Activated CD4-positive, alpha-beta memory T cell treated with anti-CD3 and anti-CD28 coated beads, Interleukin-2, amount 10 ng/mL, durations not matched to agents 7 days and 5 days (primary cell): ENCODE measurements at regions of chr19 and their contacts with region 1.

Region 1: GRCh38 chr19:21328885-21329605 is at the start of gene ZNF708:
- DNase-seq: peak; percentile 84
- H3K4me3 Mint-ChIP-seq: peak within 1 kb of the TSS; percentile 97
- H3K27ac Mint-ChIP-seq: peak within 1 kb of the TSS; percentile 99
- H3K4me1 Mint-ChIP-seq: peaks cover 34% of the 10 kb centered on the region
- H3K27me3 Mint-ChIP-seq: no peaks in the 10 kb centered on the region
- total RNA-seq, gene ZNF708: 14.8 to 16.7 TPM

Region 2: DNA sequence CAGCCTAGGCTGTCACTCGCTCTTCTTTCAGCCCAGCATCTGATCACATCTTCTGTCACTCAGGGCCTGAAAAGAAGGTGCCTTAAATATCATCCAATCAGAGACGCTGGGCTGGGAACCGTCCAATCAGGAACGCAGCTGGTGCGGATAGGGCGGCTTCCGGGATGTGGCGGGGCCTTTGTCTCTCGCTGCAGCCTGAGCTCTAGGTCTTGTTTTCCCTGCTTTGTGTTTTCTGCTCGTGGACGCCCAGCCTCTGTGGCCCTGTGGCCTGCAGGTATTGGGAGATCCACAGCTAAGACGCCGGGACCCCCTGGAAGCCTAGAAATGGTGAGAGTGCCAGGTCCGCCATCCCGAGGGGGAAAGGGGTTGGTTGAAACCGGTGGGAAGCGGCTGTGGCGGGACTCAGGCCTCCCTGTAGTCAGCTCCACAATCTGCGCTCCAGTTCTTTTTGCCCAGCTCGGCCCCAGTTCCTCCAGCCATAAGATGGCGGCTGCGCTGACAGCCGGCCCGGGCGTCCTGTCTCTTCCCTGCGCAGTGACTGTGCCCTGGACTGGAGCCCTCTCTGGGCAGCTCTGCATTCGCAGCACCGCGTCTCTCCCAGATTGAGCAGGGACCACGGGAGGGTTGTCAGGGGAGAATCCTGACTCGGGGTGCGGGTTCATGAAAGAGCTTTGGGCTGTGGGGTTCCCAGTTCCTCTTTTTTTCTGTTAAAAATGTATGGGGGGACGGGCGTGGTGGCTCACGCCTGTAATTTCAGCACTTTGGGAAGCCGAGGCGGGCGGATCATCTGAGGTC is 405.8 kb before region 1 on chr19 and contains the start of gene ZNF85:
- CTCF ChIA-PET with region 1: no interaction called
- POLR2A ChIA-PET with region 1: interaction called, 12 read pairs
- DNase-seq: peak; percentile 94
- H3K4me3 Mint-ChIP-seq: peak within 1 kb of the TSS; percentile 94
- H3K27ac Mint-ChIP-seq: peak within 1 kb of the TSS; percentile 94
- H3K4me1 Mint-ChIP-seq: peaks cover 19% of the 10 kb centered on the region
- H3K27me3 Mint-ChIP-seq: no peaks in the 10 kb centered on the region
- total RNA-seq, gene ZNF85: 16.4 to 17.2 TPM

Region 3: GRCh38 chr19:21020298-21021227 is 308.5 kb before region 1 on chr19 and contains the start of gene ZNF430:
- CTCF ChIA-PET with region 1: no interaction called
- POLR2A ChIA-PET with region 1: interaction called, 19 read pairs
- DNase-seq: peak; percentile 96
- H3K4me3 Mint-ChIP-seq: peak within 1 kb of the TSS; percentile 99
- H3K27ac Mint-ChIP-seq: peak within 1 kb of the TSS; percentile 99
- H3K4me1 Mint-ChIP-seq: peaks cover 39% of the 10 kb centered on the region
- H3K27me3 Mint-ChIP-seq: no peaks in the 10 kb centered on the region
- total RNA-seq, gene ZNF430: 24.0 to 27.0 TPM

Region 4: DNA sequence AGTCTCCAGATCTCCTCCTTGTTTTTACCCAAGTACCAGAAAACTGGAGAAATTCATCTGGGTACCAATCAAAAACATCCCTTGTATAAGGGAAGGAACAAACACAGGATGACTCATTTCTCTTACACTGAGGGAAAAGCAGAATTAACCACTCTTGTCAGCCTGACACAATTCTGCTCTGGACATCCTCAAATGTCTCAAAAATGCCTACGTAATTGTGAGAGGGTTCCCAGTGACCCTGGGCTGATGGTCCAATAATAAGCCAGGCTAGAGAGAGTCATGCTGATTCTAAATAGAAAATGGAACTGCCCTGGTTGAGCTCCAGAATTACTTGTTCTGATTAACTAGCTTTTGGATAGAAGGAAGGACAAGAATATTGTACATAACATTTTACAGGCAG is 14.4 kb before region 1 on chr19:
- CTCF ChIA-PET with region 1: interaction called, 4 read pairs
- POLR2A ChIA-PET with region 1: interaction called, 24 read pairs
- DNase-seq: no peak
- H3K4me3 Mint-ChIP-seq: no peak overlapping the region
- H3K27ac Mint-ChIP-seq: no peak overlapping the region
- H3K4me1 Mint-ChIP-seq: no peaks in the 10 kb centered on the region
- H3K27me3 Mint-ChIP-seq: no peaks in the 10 kb centered on the region

Region 5: GRCh38 chr19:21396893-21397572 is 68.0 kb after region 1 on chr19 and contains the start of gene ZNF493:
- CTCF ChIA-PET with region 1: interaction called, 3 read pairs
- POLR2A ChIA-PET with region 1: interaction called, 28 read pairs
- DNase-seq: peak; percentile 93
- H3K4me3 Mint-ChIP-seq: peak within 1 kb of the TSS; percentile 93
- H3K27ac Mint-ChIP-seq: peak within 1 kb of the TSS; percentile 81
- H3K4me1 Mint-ChIP-seq: peaks cover 22% of the 10 kb centered on the region
- H3K27me3 Mint-ChIP-seq: no peaks in the 10 kb centered on the region
- total RNA-seq, gene ZNF493: 15.7 to 17.5 TPM

Region 6: GRCh38 chr19:21586311-21587116 is 257.5 kb after region 1 on chr19:
- CTCF ChIA-PET with region 1: no interaction called
- POLR2A ChIA-PET with region 1: no interaction called
- DNase-seq: no peak
- H3K4me3 Mint-ChIP-seq: peak overlapping the region; percentile 24
- H3K27ac Mint-ChIP-seq: no peak overlapping the region
- H3K4me1 Mint-ChIP-seq: peaks cover 2% of the 10 kb centered on the region
- H3K27me3 Mint-ChIP-seq: no peaks in the 10 kb centered on the region

Region 7: GRCh38 chr19:21835810-21836444 is 506.9 kb after region 1 on chr19 and contains the start of gene ZNF43:
- CTCF ChIA-PET with region 1: interaction called, 3 read pairs
- POLR2A ChIA-PET with region 1: interaction called, 11 read pairs
- DNase-seq: peak; percentile 93
- H3K4me3 Mint-ChIP-seq: peak within 1 kb of the TSS; percentile 94
- H3K27ac Mint-ChIP-seq: peak within 1 kb of the TSS; percentile 96
- H3K4me1 Mint-ChIP-seq: peaks cover 17% of the 10 kb centered on the region
- H3K27me3 Mint-ChIP-seq: no peaks in the 10 kb centered on the region
- total RNA-seq, gene ZNF43: 21.3 to 22.9 TPM